ENCODE measurements at regions of chr11 and their contacts with region 1.

Region 1: GRCh38 chr11:32374261-32374711 is 61.1 kb downstream of the WT1 start:
- DNase-seq: peak; percentile 35
- H3K4me3 ChIP-seq: no peak overlapping the region
- H3K27ac ChIP-seq: no peak overlapping the region
- H3K4me1 ChIP-seq: no peaks in the 10 kb centered on the region
- H3K27me3 ChIP-seq: no peaks in the 10 kb centered on the region
- CTCF ChIP-seq: peak; percentile 62 to 63
- POLR2A ChIP-seq: no peak

Region 2: GRCh38 chr11:32385998-32386397 is 11.7 kb after region 1 on chr11:
- CTCF ChIA-PET with region 1: interaction called, 17 read pairs
- POLR2A ChIA-PET with region 1: no interaction called
- dilution Hi-C with region 1: no loop called
- intact Hi-C with region 1: no loop called
- DNase-seq: peak; percentile 14
- H3K4me3 ChIP-seq: no peak overlapping the region
- H3K27ac ChIP-seq: no peak overlapping the region
- H3K4me1 ChIP-seq: no peaks in the 10 kb centered on the region
- H3K27me3 ChIP-seq: no peaks in the 10 kb centered on the region
- CTCF ChIP-seq: peak; percentile 21 to 38
- POLR2A ChIP-seq: no peak

Region 3: GRCh38 chr11:32892355-32893092 is 518.2 kb after region 1 on chr11 and contains the start of gene QSER1:
- CTCF ChIA-PET with region 1: no interaction called
- POLR2A ChIA-PET with region 1: no interaction called
- dilution Hi-C with region 1: no loop called
- intact Hi-C with region 1: no loop called
- DNase-seq: peak; percentile 52
- H3K4me3 ChIP-seq: peak within 1 kb of the TSS; percentile 82 to 98 (median 93)
- H3K27ac ChIP-seq: peak within 1 kb of the TSS; percentile 89
- H3K4me1 ChIP-seq: peaks cover 13% of the 10 kb centered on the region
- H3K27me3 ChIP-seq: no peaks in the 10 kb centered on the region
- CTCF ChIP-seq: no peak
- POLR2A ChIP-seq: peak; percentile 89
- total RNA-seq, gene QSER1: 31.1 and 36.6 TPM in 2 replicates

Measured in endothelial cell of umbilical vein (primary cell).